ENCODE measurements at regions of chr7 and their contacts with region 1.

Region 1: DNA sequence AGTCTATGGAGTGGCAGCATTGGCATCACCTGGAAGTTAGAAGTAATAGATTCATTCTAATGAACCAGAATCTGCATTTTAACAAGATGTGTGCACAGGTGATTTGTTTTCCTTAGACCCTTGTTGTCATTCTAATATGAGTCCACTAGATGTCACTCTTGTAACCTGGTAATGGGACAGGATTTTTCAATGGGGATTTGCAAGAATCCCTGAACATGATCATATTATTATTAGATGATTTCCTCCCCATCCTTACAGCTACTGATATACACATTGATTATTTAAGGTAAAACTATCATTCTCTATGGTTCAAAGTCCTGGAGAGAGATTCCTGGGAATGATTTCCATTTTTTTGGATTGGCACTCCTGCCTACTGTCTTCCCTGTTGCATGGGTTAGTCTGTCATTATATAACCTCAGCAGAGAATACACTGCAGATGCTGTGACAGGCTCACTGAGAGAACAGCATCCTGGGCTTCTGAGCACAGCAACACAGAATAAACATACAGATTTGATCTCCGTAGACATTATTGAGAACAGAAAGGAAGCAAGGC is 194.9 kb downstream of the SUGCT start:
- DNase-seq: no peak
- ATAC-seq: peak; percentile 59

Region 2: GRCh38 chr7:40057292-40057691 is 272.4 kb before region 1 on chr7:
- intact Hi-C with region 1: no loop called
- DNase-seq: no peak
- ATAC-seq: peak; percentile 65

Region 3: GRCh38 chr7:40604601-40605438 is 275.1 kb after region 1 on chr7:
- intact Hi-C with region 1: loop called (anchors 5 kb)
- DNase-seq: peak; percentile 66
- ATAC-seq: peak; percentile 82

Region 4: DNA sequence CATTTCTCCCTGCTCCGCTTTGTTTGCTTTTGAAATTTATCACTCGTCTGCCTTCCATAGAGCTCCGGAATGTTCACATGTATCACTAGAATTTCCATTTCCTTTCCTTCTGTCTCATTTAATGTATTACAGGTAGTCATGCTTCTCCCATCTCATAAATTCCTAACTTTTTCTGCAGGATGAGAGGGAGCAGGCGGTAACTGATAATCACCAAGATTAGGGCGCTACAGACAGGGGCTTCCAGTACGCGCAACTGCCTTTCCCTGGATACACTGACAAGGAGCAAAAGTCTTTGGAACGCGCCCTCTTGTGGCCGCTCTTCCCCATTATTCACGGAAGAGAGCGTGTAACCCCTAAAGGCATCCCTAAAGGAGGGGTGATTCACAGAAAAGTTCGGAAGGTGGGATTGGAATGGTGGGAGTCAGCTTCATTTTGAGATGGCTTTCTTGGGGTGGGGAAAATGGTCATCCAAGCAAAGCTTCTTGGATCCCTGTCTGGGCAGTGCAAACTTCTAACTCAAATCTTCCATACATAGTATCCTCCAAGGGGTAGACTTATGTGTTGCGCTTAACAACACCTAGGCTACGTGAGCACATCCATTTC is 1366.7 kb after region 1 on chr7:
- intact Hi-C with region 1: loop called (anchors 10 kb)
- DNase-seq: peak; percentile 86
- ATAC-seq: peak; percentile 86

Measured in Right ventricle myocardium superior (tissue), 1 donor.